Gastrocnemius medialis (tissue), 4 donors: ENCODE measurements at regions of chr17 and their contacts with region 1.

Region 1: GRCh38 chr17:60641810-60642220 is 35.8 kb upstream of the BCAS3 start:
- DNase-seq: peak; percentile 31
- ATAC-seq: peak; percentile 43 to 62
- H3K4me3 ChIP-seq: no peak overlapping the region
- H3K27ac ChIP-seq: peak overlapping the region in 2 of 4 donors; percentile 1 to 36
- H3K4me1 ChIP-seq: peaks cover 7 to 22% of the 10 kb centered on the region in 2 donors
- H3K27me3 ChIP-seq: no peaks in the 10 kb centered on the region
- CTCF ChIP-seq: peak in 3 of 5 experiments; percentile 23 to 48 (median 27)
- POLR2A ChIP-seq: no peak

Region 2: DNA sequence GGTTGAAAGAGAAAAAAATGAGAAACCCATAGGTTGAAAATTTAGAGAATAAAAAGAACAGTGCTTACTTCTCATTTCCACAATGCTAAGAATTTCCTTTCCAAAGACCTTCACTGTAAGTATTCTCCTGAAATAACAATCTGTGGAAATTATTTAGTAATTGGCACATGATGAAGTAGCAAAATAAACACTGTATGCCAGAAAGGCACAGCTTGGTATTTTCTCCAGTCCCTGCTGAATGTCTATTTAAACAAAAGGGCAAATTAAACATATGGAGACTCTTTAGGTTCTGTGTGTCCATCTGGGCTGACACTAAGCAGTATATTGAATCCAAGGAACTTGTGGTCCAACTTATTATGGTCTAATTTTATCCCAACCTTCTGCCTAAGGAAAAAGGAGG is 173.4 kb before region 1 on chr17:
- in situ Hi-C with region 1: loop called in 1 of 4 experiments (anchors 25 kb)
- intact Hi-C with region 1: loop called (anchors 10 kb)
- DNase-seq: no peak
- ATAC-seq: no peak
- H3K4me3 ChIP-seq: no peak overlapping the region
- H3K27ac ChIP-seq: peak overlapping the region; percentile 35 to 61 (median 45)
- H3K4me1 ChIP-seq: peaks cover 27 to 37% of the 10 kb centered on the region in 2 donors
- H3K27me3 ChIP-seq: no peaks in the 10 kb centered on the region
- CTCF ChIP-seq: no peak
- POLR2A ChIP-seq: no peak

Region 3: DNA sequence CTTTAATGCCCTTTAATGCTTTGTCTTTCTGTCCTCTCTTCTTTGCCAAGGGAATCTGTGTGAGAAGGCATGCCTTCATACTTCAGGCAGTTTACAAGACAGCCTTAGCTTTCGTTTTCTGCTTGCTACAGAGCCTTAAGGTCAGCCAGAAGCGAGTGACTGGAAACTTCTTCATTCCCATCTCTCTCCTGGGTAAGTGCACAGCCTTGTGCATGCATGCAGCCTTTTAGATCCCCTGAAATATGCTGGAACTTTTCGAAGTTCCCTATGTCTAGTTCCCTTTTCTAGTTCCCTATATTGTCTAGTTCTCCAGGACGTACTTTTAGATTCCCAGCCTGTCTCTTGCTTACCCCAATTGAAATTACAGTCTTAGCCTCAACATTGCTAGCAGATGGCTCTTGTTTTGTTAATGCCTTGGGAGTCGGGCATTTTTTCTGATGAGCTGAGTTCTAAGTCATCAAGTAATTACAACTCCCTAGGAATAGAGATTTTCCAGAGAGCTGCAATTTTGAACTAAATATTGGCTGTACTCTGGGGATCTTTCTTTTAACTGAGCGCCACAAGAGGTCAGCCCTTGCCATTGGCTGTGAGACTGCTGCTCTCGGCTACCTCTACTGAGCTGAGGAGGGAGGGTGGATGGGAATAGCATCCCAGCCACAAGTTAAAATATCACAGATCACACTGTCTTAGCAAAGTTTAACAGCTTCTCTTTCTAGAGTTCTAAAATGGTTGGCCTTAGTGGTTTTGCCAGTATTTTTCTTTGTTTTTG is 64.5 kb before region 1 on chr17:
- in situ Hi-C with region 1: loop called (anchors 5 to 10 kb)
- intact Hi-C with region 1: loop called (anchors 1 kb)
- DNase-seq: peak in 1 of 2 donors; percentile 28
- ATAC-seq: peak; percentile 78 to 91
- H3K4me3 ChIP-seq: peak overlapping the region; percentile 25 to 43 (median 41)
- H3K27ac ChIP-seq: peak overlapping the region; percentile 56 to 72 (median 66)
- H3K4me1 ChIP-seq: peaks cover 4 to 6% of the 10 kb centered on the region in 2 donors
- H3K27me3 ChIP-seq: no peaks in the 10 kb centered on the region
- CTCF ChIP-seq: peak; percentile 19 to 58 (median 32)
- POLR2A ChIP-seq: no peak

Region 4: GRCh38 chr17:60599620-60600489 is 42.0 kb before region 1 on chr17 and contains the start of gene PPM1D:
- in situ Hi-C with region 1: no loop called
- intact Hi-C with region 1: loop called (anchors 2 kb)
- DNase-seq: peak; percentile 98 to 99
- ATAC-seq: peak; percentile 89 to 92
- H3K4me3 ChIP-seq: peak within 1 kb of the TSS; percentile 87 to 96 (median 91)
- H3K27ac ChIP-seq: peak within 1 kb of the TSS; percentile 95 to 98 (median 98)
- H3K4me1 ChIP-seq: peaks cover 30% of the 10 kb centered on the region in 2 donors
- H3K27me3 ChIP-seq: no peaks in the 10 kb centered on the region
- CTCF ChIP-seq: peak in 2 of 5 experiments; percentile 13 to 20
- POLR2A ChIP-seq: peak; percentile 98 to 99
- total RNA-seq, gene PPM1D: 4.6 to 11.4 (median 9.2) TPM